ENCODE measurements at regions of chr6 and their contacts with region 1.

Region 1: DNA sequence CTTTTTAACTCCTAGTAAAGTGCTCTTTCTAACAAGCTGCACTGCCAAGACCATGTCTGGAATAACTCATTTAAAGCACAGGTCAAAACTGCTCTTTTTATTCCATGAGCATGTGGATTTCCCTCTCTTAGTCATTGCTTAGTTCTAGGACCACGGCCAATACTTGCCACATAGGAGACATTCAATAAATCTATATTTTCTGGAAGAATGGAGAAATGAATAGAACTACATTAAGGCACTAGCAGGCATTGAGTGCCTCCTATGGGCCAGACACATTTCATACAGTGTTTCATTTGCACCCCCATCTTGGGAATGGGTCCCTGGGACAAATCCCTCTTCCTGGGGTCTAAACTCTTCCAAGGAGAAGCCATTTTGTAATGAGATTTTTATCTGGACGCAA is 552.8 kb upstream of the CITED2 start:
- DNase-seq: no peak
- H3K4me3 Mint-ChIP-seq: no peak overlapping the region
- H3K27ac Mint-ChIP-seq: no peak overlapping the region
- H3K4me1 Mint-ChIP-seq: no peaks in the 10 kb centered on the region
- H3K27me3 Mint-ChIP-seq: peaks cover 2% of the 10 kb centered on the region

Region 2: GRCh38 chr6:139369568-139370282 is 557.5 kb before region 1 on chr6:
- CTCF ChIA-PET with region 1: interaction called, 9 read pairs
- POLR2A ChIA-PET with region 1: no interaction called
- intact Hi-C with region 1: loop called (anchors 1 kb)
- DNase-seq: peak; percentile 14
- H3K4me3 Mint-ChIP-seq: peak overlapping the region; percentile 15
- H3K27ac Mint-ChIP-seq: peak overlapping the region; percentile 51
- H3K4me1 Mint-ChIP-seq: peaks cover 39% of the 10 kb centered on the region
- H3K27me3 Mint-ChIP-seq: no peaks in the 10 kb centered on the region

Measured in activated CD4-positive, alpha-beta memory T cell treated with anti-CD3 and anti-CD28 coated beads for 36 hours (primary cell).